Panc1 (cell line): ENCODE measurements at regions of chr21 and their contacts with region 1.

Region 1: DNA sequence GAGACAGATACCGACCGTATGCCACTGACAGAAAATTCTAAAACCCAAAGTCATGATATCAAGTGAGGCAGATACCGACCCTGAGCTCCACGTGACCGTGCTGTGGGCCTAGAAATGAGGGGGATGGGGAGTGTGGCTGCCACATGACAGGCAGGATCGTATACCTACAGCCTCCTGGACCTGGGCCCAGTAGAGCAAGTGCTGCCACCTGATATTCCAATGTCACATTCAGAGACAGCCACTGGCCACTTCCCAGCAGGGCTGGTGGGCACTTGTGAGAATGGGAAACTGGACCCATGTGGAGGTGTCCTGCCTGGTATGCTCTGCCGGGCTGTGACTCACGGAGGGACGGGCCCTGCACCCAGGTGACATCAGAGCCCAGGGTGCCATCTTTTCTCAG is 44.6 kb upstream of the CLDN14 start:
- DNase-seq: no peak
- ATAC-seq: no peak
- H3K4me3 ChIP-seq: no peak overlapping the region
- H3K27ac ChIP-seq: no peak overlapping the region
- H3K4me1 ChIP-seq: no peaks in the 10 kb centered on the region
- H3K27me3 ChIP-seq: no peaks in the 10 kb centered on the region
- CTCF ChIP-seq: no peak

Region 2: DNA sequence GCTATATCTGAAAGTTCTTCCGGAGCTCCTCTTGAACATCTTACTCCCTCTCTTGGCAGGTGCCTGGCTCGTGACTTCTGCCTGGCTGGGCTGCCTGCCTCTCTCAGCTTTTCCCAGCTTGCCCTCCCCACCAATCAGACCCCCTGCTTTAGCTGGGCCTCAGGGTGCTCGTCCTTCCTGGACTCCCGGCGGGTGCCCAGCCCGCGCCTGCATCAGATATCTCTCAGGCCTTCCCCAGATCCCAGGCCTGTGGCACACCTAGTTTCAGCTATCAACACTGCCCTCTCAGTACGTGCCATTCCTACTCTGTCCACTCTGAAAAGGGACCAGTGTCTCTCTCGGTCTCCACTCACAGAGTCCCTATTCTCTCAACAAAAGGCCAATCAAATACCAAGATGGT is 52.0 kb after region 1 on chr21:
- CTCF ChIA-PET with region 1: no interaction called
- POLR2A ChIA-PET with region 1: no interaction called
- in situ Hi-C with region 1: no loop called
- intact Hi-C with region 1: loop called (anchors 10 kb)
- DNase-seq: no peak
- ATAC-seq: no peak
- H3K4me3 ChIP-seq: no peak overlapping the region
- H3K27ac ChIP-seq: no peak overlapping the region
- H3K4me1 ChIP-seq: no peaks in the 10 kb centered on the region
- H3K27me3 ChIP-seq: peaks cover 2% of the 10 kb centered on the region
- CTCF ChIP-seq: no peak